Activated B cell treated with CpG ODN at 0.5 μM for 24 hours (primary cell): ENCODE measurements at regions of chr15 and their contacts with region 1.

Region 1: DNA sequence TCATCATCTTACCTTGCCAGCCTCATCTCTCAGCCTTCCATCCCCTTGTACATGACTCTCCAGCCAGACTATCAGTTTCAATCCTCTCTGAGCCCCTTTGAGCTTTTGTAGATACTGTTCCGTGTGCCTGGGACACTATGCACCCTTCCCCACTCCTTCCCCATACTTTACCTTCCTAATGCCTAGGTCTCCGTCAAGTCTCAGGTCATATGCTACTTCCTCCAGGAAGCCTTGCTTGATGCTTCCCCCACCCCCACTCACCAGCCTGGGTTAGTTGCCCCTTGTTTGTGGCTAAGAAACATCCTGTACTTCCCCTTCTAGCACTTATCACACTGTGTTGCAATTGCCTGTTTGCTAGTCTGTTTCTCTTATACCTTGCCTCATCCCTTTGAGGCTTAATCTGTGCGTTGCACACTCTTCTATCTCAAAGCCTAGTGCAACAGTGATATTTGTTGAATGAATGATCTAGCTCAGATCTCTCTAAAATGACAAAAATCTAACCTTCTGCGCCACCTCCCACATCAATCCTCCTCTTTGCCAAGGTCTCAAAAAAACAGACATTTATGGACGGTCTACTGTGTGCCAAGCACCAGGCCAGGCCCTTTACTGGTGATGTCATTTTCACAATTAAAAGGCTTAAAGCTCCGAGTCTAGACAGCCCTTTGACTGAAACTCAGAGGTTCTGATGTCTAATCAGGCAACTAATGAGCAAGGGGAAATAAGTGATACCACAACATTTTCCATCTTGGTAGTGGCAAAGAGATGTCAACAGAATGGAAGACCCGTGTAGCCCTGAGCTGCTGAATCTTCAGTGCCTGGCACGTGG is 6.5 kb upstream of the USP3 start:
- DNase-seq: peak; percentile 64
- ATAC-seq: peak; percentile 60
- H3K4me3 Mint-ChIP-seq: no peak overlapping the region
- H3K27ac Mint-ChIP-seq: no peak overlapping the region
- H3K4me1 Mint-ChIP-seq: peaks cover 64% of the 10 kb centered on the region
- H3K27me3 Mint-ChIP-seq: no peaks in the 10 kb centered on the region
- CTCF ChIP-seq: no peak

Region 2: GRCh38 chr15:63473999-63474809 is 23.7 kb before region 1 on chr15:
- CTCF ChIA-PET with region 1: interaction called, 17 read pairs
- POLR2A ChIA-PET with region 1: interaction called, 509 read pairs
- intact Hi-C with region 1: loop called (anchors 1 kb)
- DNase-seq: peak; percentile 59
- ATAC-seq: peak; percentile 64
- H3K4me3 Mint-ChIP-seq: peak overlapping the region; percentile 83
- H3K27ac Mint-ChIP-seq: peak overlapping the region; percentile 99
- H3K4me1 Mint-ChIP-seq: peaks cover 75% of the 10 kb centered on the region
- H3K27me3 Mint-ChIP-seq: no peaks in the 10 kb centered on the region
- CTCF ChIP-seq: no peak

Region 3: DNA sequence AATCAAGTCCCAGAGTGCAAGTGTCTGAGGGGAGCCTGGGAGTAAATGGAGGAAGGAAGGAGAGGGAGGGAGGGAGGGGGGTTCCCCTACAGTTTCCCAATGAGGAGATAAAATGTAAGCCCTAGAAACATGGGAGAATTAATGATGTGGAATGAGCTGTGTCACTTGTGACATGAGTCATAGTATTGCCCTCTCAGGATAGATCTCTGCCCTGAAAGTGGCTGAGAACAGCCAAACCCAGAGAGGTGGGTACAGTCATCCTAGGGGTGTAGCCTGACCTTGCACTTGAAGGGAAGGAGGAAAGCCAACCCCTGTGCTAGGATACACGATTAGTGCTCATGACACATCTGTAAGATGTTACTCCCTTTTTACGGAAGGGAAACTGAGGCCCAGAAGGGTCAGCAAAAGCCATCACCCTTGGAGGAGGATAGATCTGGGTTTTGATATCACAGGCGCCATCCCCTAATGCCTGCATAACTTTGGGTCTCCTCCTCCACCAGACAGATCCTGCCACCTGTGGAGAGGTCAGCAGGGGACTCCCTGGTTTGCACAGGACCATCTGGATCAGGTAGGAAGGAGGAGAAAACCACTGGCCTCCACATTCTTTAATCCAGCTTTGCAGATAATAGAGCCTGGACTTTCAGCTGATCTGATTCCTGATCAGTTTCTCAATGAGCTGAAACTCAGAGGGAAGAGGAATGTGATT is 16.6 kb before region 1 on chr15:
- CTCF ChIA-PET with region 1: interaction called, 46 read pairs
- POLR2A ChIA-PET with region 1: interaction called, 509 read pairs
- intact Hi-C with region 1: loop called (anchors 1 kb)
- DNase-seq: no peak
- ATAC-seq: peak; percentile 59
- H3K4me3 Mint-ChIP-seq: peak overlapping the region; percentile 74
- H3K27ac Mint-ChIP-seq: peak overlapping the region; percentile 97
- H3K4me1 Mint-ChIP-seq: peaks cover 92% of the 10 kb centered on the region
- H3K27me3 Mint-ChIP-seq: no peaks in the 10 kb centered on the region
- CTCF ChIP-seq: no peak

Region 4: DNA sequence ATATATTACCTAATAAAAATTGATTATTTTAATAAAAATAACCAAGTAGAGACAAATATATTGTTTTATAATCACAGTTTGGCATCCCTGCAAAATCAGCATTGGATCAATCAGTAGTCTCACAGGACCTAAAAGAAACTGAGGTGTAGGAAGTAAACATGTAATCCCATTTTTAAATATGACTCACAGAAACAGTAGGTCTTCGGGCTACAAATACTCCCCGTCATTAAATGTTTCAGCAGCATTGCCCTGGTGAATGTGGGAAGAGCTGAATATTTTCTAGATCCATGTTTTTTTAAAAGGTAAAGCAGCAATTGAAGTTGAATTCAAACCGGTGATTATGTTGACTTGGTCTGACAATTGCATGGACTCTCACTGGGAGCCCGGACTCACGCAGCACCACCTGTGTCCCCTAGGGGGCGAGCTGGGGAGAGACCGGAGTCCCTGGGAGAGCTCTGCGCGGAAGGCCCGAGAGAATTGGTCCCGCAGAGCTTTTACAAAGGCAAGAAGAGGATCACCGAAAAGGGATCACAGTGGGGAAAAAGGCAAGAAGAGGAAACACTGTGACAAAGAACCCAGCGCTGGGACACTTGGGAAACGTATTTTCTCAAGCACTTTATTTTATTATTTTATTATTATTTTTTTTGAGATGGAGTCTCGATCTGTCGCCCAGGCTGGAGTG is 10.6 kb before region 1 on chr15:
- CTCF ChIA-PET with region 1: interaction called, 103 read pairs
- POLR2A ChIA-PET with region 1: interaction called, 509 read pairs
- intact Hi-C with region 1: loop called (anchors 1 kb)
- DNase-seq: peak; percentile 80
- ATAC-seq: peak; percentile 69
- H3K4me3 Mint-ChIP-seq: peak overlapping the region; percentile 75
- H3K27ac Mint-ChIP-seq: peak overlapping the region; percentile 83
- H3K4me1 Mint-ChIP-seq: peaks cover 83% of the 10 kb centered on the region
- H3K27me3 Mint-ChIP-seq: no peaks in the 10 kb centered on the region
- CTCF ChIP-seq: no peak

Region 5: GRCh38 chr15:63881431-63881830 is 383.6 kb after region 1 on chr15:
- CTCF ChIA-PET with region 1: no interaction called
- POLR2A ChIA-PET with region 1: no interaction called
- intact Hi-C with region 1: loop called (anchors 10 kb)
- DNase-seq: no peak
- ATAC-seq: peak; percentile 84
- H3K4me3 Mint-ChIP-seq: peak overlapping the region; percentile 61
- H3K27ac Mint-ChIP-seq: peak overlapping the region; percentile 86
- H3K4me1 Mint-ChIP-seq: peaks cover 68% of the 10 kb centered on the region
- H3K27me3 Mint-ChIP-seq: no peaks in the 10 kb centered on the region
- CTCF ChIP-seq: no peak